Endothelial cell of umbilical vein (primary cell): ENCODE measurements at regions of chr2 and their contacts with region 1.

Region 1: GRCh38 chr2:178819992-178820391 is 12.8 kb upstream of the TTN start:
- DNase-seq: peak; percentile 63
- H3K4me3 ChIP-seq: peak overlapping the region in 2 of 3 experiments; percentile 27 to 66
- H3K27ac ChIP-seq: peak overlapping the region; percentile 80
- H3K4me1 ChIP-seq: peaks cover 21% of the 10 kb centered on the region
- H3K27me3 ChIP-seq: no peaks in the 10 kb centered on the region
- CTCF ChIP-seq: no peak
- POLR2A ChIP-seq: no peak

Region 2: DNA sequence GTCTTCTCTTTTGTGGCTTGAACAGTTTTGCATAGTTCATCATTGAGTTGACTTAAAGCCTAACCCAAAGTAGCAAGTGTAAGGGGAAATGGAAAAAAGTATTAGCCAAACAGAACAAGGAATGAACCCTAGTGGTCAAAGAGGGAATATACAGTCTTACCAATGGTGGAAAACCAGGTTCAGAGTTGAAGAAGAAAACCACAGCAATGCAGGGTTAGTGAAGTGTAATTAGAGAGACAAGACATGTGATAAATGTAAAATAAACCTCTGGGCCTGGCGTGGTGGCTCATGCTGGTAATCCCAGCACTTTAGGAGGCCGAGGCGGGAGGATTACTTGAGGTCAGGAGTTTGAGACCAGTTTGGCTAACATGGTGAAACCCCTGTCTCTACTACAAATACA is 15.2 kb before region 1 on chr2:
- CTCF ChIA-PET with region 1: interaction called, 10 read pairs
- POLR2A ChIA-PET with region 1: no interaction called
- dilution Hi-C with region 1: no loop called
- intact Hi-C with region 1: no loop called
- DNase-seq: no peak
- H3K4me3 ChIP-seq: no peak overlapping the region
- H3K27ac ChIP-seq: no peak overlapping the region
- H3K4me1 ChIP-seq: no peaks in the 10 kb centered on the region
- H3K27me3 ChIP-seq: no peaks in the 10 kb centered on the region
- CTCF ChIP-seq: peak; percentile 25 to 32
- POLR2A ChIP-seq: no peak